ENCODE measurements at regions of chrX and their contacts with region 1.

Region 1: DNA sequence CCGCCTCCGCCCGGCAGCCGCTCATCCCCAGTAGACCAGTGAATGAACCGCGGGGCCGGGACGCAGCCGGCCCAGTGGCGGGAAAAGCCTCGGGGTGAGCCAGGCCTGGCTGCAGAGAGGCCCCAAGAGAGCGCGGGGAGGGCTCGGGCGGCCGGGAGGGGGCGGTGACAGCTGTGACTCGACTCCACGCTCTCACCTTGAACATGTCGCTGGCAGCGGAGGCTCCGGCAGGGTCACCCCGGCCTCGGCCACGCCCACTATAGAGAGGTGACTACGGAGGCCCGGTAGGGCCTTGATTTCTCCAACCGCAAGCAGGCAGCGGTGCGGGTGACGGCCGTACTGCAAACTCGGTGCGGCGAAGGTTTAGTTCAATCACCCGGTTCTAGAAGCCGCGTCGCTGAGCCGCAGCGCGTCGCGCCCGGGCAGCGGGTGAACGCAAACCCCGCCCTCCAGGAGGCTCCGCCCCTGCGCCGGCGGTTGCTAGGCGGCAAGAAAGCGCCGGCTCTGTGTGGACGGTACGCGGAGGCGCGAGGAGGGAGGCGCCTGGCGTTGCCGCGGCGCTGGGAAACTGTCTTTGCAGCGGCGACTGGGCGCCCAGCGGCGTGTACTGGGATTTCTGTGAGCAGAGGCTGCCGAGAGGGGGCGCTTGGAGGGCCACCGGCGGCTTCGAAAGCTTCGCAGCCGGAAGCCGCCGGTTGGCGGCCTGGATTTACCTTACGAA is at the starts of genes APOO and CXorf58:
- DNase-seq: peak; percentile 97 to 98
- H3K4me3 ChIP-seq: peak within 1 kb of the TSS; percentile 77
- H3K4me1 ChIP-seq: peaks cover 12% of the 10 kb centered on the region
- H3K27me3 ChIP-seq: no peaks in the 10 kb centered on the region

Region 2: DNA sequence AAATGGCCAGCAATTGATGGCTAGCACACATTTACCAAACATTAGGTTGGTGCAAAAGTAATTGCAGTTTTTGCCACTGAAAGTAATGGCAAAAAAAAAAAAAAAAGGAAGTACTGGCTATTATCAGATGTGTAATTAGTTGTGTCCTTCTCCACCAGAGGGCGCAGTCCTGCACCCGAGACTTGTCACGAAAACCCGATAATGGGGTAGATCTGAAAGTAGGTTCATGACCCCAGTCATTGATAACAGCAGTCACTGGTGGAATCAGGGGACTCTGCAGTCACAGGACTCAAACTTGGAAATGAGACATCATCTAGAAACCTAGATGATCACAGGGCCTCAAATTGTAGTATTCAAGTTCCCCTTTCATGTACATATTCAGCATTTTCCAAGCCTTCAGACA is 151.5 kb before region 1 on chrX:
- in situ Hi-C with region 1: loop called (anchors 10 kb)
- DNase-seq: peak; percentile 59 to 83
- H3K4me3 ChIP-seq: no peak overlapping the region
- H3K4me1 ChIP-seq: peaks cover 5% of the 10 kb centered on the region
- H3K27me3 ChIP-seq: no peaks in the 10 kb centered on the region

Region 3: DNA sequence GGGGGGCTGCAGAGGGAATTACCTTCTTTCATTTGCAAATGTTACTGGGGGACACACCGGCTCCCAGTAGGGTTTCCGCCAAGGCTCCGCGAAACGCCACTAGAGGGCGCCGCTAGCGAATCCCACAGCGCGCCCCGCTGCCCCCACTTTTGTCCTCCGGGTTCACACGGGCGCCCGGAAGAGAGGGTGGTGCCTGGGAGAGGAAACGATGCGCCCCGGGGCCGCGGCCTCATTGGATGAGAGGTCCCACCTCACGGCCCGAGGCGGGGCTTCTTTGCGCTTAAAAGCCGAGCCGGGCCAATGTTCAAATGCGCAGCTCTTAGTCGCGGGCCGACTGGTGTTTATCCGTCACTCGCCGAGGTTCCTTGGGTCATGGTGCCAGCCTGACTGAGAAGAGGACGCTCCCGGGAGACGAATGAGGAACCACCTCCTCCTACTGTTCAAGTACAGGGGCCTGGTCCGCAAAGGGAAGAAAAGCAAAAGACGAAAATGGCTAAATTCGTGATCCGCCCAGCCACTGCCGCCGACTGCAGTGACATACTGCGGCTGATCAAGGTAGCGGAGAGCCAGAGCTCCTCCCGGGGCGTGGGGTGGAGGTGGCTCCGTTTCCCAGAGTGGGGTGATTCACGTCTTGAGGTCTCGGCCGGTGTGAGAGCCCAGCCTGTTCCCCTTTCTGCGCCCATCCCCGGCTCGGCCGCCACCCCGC is 124.6 kb before region 1 on chrX and contains the start of gene SAT1:
- in situ Hi-C with region 1: loop called (anchors 10 kb)
- DNase-seq: peak; percentile 98 to 100
- H3K4me3 ChIP-seq: peak within 1 kb of the TSS; percentile 69
- H3K4me1 ChIP-seq: peaks cover 18% of the 10 kb centered on the region
- H3K27me3 ChIP-seq: no peaks in the 10 kb centered on the region

Region 4: DNA sequence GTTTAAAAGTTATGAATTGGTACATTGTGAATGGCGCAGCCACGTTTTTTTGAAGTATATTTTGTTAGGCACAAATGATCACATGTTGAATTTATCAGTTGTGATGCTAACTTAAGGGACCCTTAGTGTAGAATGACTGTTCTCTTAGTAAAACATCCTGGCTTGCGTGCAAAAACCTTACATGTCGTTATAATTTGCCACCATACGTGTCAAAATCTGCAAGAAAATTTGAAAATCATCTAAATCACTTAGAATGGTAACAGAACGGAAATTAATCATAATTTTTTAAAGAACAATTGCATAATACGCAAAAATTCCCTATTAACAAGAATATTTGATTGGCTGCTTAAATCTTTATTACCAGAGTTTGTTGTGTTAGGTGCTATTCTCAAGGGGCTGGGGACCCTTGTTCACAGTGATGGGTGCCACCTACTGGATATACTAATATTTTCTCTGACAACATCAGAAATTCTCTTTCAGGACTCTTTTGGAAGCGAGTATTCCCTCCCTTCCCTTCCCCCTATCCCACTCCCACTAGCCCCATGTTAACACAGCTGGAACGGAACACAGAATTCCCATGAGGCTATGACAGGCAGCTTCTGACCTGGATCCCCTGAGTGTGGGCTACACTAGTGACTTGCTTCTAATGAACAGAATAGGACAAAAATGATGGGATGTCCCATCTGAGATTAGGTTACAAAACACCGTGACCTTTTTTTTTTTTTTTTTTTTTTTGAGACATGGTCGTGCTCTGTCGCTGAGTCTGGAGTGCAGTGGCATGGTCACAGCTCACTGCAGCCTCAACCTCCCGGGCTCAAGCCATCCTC is 334.4 kb after region 1 on chrX:
- in situ Hi-C with region 1: loop called (anchors 25 kb)
- DNase-seq: peak; percentile 52 to 71
- H3K4me3 ChIP-seq: no peak overlapping the region
- H3K4me1 ChIP-seq: peaks cover 11% of the 10 kb centered on the region
- H3K27me3 ChIP-seq: no peaks in the 10 kb centered on the region

Measured in HAP-1 (cell line).